GM10248 (cell line): ENCODE measurements at regions of chr1 and their contacts with region 1.

Region 1: GRCh38 chr1:205658943-205659581 is 21.2 kb downstream of the SLC45A3 start:
- DNase-seq: peak; percentile 89
- CTCF ChIP-seq: peak; percentile 97

Region 2: DNA sequence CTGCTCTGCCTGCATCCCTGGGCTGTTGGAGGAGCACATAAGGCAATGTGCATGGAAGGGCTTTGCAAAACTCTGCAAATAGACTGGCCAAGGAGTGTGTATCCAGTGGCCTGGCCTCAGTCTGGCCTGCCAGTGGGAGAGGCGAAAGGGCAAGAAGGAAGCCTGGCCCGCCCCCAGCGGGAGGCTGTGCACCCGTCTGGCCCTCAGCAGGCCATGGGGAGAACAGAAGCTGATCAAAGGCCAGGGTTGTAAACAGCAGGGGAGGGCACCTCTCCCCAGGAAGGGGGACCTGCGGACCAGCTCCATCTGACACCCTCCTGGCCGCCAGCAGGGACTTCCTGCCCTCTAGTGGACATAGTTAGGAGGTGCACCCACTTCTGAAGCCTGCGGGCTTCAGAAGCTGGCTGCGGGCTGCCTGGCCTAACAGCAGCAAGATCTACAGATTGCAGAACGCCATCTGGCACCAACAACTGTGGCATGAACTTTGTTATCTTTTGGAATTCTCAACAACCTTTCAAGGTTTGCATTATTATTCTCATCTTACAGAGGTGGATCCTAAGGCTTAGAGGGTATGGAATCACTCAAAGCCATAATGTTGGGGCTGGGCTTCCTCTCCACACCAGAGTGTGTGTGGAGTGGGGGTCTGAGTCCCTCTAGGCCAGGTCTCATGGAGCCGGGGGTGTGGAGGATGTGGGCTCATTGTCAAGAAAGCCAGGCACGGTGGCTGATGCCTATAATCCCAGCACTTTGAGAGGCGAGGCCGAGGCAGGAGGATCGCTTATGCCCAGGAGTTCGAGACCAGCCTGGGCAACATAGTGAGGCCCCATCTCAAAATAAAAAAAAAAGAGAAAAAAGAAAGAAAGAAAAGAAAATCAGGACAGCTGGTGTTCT is 173.5 kb before region 1 on chr1:
- CTCF ChIA-PET with region 1: interaction called, 40 read pairs
- POLR2A ChIA-PET with region 1: no interaction called
- DNase-seq: peak; percentile 87
- CTCF ChIP-seq: peak; percentile 90

Region 3: GRCh38 chr1:205578780-205579606 is 80.1 kb before region 1 on chr1:
- CTCF ChIA-PET with region 1: interaction called, 18 read pairs
- POLR2A ChIA-PET with region 1: no interaction called
- DNase-seq: no peak
- CTCF ChIP-seq: no peak

Region 4: DNA sequence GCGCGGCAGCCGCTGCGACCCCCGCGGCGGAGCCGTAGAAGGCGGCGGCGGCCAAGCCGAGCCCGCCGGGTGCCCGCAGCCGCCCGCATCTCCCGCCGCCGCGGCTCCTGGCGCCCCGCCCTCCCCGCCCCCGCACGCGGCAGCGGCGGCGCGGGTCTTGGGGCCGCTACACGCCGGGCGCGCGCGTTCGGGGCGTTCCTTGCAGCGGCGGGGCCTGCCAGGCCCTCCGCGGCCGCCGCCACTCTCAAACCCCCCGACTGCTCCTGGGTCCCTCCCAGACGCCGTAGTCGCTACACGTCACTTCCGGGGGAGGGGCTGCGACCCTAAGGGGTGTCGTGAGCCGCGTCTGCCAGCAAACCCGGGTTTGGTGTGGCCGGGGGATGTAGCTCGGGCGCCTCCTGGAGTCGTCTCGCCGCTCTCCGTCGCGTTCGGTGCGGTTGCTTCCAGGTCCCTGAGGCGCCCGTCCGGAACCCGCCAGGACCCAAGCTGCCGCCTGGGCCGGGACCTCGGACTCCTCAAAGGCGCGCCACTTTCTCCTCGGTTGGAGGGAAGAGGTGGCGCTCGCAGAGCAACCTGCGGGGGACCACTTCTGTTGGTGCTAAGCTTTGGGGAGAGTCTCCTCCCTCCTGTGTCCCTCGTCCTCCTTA is 27.2 kb before region 1 on chr1 and contains the start of gene ELK4:
- CTCF ChIA-PET with region 1: interaction called, 31 read pairs
- POLR2A ChIA-PET with region 1: interaction called, 6 read pairs
- DNase-seq: peak; percentile 97
- CTCF ChIP-seq: peak; percentile 79

Region 5: GRCh38 chr1:205693421-205693991 is 34.4 kb after region 1 on chr1:
- CTCF ChIA-PET with region 1: interaction called, 78 read pairs
- POLR2A ChIA-PET with region 1: no interaction called
- DNase-seq: peak; percentile 31
- CTCF ChIP-seq: no peak

Region 6: DNA sequence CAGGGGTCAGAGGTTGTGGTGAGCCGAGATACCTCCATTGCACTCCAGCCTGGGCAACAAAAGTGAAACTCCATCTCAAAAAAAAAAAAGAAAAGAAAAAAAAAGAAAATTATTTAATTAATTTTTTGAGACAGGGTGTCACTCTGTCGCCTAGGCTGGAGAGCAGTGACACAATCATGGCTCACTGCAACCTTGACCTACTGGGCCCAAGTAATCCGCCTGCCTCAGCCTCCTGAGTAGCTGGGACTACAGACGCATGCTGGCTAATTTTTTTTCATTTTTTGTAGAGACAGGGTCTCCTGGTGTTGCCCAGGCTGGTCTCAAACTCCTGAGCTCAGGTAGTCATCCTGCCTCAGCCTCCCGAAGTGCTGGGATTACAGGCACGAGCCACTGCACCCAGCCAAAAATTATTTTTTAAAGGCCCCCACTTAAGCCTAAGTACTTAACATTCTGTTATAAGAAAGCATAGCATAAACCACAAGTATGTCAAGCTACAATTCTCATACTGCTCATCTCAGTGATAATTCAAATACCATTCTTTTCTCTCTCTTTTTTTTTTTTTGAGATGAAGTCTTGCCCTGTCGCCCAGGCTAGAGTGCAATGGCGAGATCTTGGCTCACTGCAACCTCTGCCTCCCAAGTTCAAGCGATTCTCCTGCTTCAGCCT is 71.0 kb after region 1 on chr1:
- CTCF ChIA-PET with region 1: interaction called, 18 read pairs
- POLR2A ChIA-PET with region 1: no interaction called
- DNase-seq: no peak
- CTCF ChIP-seq: no peak

Region 7: DNA sequence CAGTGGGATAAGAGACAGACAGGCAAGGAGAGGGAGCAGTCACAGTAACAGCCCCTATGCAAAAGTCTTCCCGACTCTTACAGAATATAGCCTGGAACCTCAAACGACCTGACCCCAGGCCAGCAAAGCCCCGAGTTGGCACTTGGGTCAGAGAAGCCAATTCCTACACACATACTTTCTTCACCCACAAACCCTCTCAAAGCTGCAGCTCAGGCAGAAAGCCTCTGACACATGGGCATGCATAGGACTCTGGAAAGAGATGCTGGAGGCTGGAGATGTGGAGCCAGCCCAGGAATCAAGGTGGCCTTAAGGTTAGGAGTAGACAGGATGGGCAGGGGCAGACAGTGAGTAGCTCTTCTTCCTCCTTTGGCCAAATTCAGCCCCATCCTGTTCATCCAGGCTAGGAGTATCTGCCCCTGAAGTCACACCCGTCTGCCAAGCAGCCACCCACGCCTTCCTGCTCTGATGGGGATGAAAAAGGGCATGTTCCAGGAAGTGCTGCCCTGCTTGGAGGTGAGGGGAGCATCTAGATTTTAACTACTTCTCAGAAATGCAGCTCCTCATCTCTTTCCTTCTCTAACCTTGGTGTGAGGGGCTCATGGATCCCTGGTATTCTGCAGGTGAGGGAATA is 146.1 kb after region 1 on chr1:
- CTCF ChIA-PET with region 1: interaction called, 12 read pairs
- POLR2A ChIA-PET with region 1: no interaction called
- DNase-seq: no peak
- CTCF ChIP-seq: no peak